GM23248 (cell line): ENCODE measurements at regions of chr12 and their contacts with region 1.

Region 1: DNA sequence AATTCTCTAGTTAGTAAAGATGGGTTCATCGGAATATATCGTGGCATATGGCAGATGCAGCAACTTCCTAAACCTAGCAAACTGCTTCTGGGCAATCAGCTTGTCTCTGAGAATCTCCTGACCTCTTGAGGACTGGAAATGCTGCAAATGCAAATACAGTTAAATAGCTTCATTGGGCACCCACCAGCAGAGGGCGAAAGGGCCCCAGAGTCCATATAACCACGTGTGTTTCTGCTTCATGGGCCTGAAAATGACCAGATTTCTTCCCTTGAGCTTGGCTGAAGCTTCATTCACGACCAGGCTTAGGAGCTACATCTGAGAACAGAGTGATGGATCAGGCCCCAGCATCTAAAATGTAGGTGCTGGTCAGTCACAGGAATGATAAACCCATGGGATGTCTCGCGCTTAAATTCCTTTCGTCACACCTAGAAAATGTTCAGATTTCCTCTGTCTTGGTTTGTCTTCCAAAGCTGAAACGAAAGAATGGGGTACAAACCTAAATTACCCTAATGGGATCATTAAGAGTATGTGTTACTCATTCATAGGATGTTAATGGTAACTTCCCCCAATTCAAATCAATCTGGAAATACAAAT is 1482.5 kb upstream of the TMEM132C start:
- DNase-seq: peak; percentile 74
- H3K4me3 ChIP-seq: no peak overlapping the region
- H3K27ac ChIP-seq: no peak overlapping the region
- H3K4me1 ChIP-seq: no peaks in the 10 kb centered on the region
- H3K27me3 ChIP-seq: no peaks in the 10 kb centered on the region

Region 2: GRCh38 chr12:127060310-127060847 is 276.0 kb after region 1 on chr12:
- in situ Hi-C with region 1: no loop called
- DNase-seq: no peak
- H3K4me3 ChIP-seq: no peak overlapping the region
- H3K27ac ChIP-seq: no peak overlapping the region
- H3K4me1 ChIP-seq: 0 out of 2 replicates have a peak, but pooled peaks cover under 1% of the 10 kb centered on the region
- H3K27me3 ChIP-seq: no peaks in the 10 kb centered on the region

Region 3: DNA sequence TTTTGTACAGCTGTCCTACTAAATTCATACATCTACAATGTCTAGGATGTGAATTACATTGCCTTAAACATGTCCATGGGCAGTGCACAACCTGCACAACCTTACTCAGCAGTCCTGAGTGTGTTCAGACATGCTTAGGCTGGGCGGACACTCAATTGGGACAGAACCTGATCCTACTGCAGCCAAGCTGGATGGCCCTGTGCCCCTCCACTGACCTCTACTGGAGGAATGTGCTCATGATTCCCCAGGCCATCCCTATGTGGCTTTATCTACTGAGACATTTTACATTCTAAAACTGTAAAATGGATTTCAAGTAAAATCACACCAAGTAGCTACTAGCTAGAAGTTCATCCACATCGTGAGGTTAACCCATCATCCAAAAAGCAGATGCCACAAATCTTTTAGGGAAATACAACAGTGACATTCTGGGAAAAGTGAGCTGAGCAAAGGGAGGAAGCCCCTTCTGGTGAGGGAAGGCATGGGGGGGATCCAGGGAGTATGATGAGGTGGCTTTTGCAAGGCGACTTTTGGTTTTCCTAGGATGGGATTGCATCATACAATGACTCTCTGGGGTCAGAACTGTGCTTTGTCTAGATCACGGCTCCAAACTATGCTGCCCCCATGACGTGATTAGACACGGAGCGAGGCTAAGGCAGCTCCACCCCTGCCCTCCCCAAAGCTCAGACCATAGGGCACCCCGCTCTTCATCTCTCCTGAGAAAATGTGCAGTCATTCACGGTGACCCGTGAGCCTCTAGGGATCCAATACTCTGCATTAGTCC is 570.8 kb after region 1 on chr12:
- in situ Hi-C with region 1: loop called (anchors 25 kb)
- DNase-seq: peak; percentile 60
- H3K4me3 ChIP-seq: no peak overlapping the region
- H3K27ac ChIP-seq: no peak overlapping the region
- H3K4me1 ChIP-seq: no peaks in the 10 kb centered on the region
- H3K27me3 ChIP-seq: no peaks in the 10 kb centered on the region

Region 4: GRCh38 chr12:127677537-127678131 is 893.2 kb after region 1 on chr12:
- in situ Hi-C with region 1: loop called (anchors 25 kb)
- DNase-seq: peak; percentile 84
- H3K4me3 ChIP-seq: no peak overlapping the region
- H3K27ac ChIP-seq: no peak overlapping the region
- H3K4me1 ChIP-seq: peaks cover 4% of the 10 kb centered on the region; the same call in 1 of the 2 replicates
- H3K27me3 ChIP-seq: no peaks in the 10 kb centered on the region